Dendritic cell treated with granulocyte-macrophage colony-stimulating factor and Interleukin-4, amounts not matched to agents 40 ng/mL and 50 ng/mL, for 4 days (primary cell): ENCODE measurements at regions of chr20 and their contacts with region 1.

Region 1: DNA sequence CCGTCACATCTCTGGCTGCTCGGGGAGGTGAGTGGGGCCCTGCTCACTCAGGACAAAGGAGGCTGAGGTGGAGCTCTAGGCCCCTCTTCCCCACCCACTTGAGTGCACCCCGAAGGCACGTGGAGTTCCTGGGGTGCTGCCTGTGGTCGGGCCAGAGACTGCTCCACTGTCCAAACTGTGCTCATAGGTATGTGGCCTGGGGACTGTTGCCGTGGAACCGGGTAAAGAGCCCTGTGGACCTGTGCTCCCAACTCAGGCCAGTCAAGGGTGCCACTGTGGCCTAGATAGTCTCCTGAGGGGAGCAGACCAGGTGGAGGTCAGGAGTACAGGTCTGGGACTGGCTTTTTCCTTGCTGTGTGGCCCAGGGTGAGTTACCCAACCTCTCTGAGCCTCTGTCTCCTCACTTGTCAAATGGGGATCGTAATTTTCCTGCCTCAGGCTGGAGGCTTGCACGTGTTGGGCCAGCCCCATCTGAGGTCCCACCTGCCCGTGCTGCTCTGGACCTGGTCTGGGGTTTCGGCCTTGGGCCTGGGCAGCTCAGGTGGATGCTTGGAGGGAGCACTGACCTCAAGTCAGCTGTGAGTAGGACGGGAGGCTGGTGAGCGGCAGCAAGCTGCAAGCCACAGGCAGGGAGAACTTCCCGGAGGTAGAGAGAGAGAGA is 12.4 kb upstream of the NPBWR2 start:
- H3K4me3 Mint-ChIP-seq: no peak overlapping the region
- H3K27ac Mint-ChIP-seq: no peak overlapping the region
- H3K4me1 Mint-ChIP-seq: peaks cover 6% of the 10 kb centered on the region
- H3K27me3 Mint-ChIP-seq: peaks cover 29% of the 10 kb centered on the region

Region 2: DNA sequence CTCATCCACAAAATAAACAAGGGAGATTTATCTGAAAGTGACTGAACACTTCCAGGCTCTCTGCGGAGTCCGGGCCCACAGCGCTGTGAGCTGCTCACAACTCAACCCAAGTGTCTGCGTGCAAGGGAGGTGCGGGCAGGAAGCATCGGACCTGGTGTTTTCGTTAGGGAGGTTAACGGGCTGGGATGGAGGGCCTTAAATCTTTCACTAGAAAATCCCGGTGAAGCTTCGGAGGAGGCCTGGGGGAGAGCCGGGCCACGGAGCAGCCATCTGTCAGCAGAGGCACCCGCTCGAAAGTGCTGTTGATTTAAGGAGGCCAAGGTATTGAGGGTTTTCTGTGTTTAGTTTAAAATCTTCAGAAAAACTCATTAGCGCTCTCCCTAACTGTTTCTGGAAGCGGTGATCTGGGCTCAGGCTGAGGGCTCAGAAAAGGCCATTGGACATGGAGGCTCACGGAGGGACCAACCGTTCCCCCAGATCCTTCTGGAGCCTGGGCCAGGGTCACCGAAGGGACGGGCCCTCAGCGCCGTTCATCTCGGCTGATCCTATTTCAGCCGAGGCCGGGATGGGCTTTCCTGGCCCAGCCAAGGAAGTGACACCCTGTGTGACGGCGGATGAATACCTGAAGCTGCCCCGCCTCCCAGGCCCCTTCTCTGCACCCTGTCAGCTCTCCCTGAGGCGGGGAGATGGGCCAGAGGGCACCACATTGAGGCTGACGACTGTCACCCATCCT is 1664.7 kb before region 1 on chr20:
- intact Hi-C with region 1: no loop called
- H3K4me3 Mint-ChIP-seq: no peak overlapping the region
- H3K27ac Mint-ChIP-seq: no peak overlapping the region
- H3K4me1 Mint-ChIP-seq: no peaks in the 10 kb centered on the region
- H3K27me3 Mint-ChIP-seq: peaks cover 8% of the 10 kb centered on the region

Region 3: GRCh38 chr20:63980806-63981728 is 138.7 kb before region 1 on chr20 and contains the start of gene PRPF6:
- intact Hi-C with region 1: loop called (anchors 5 kb)
- H3K4me3 Mint-ChIP-seq: peak within 1 kb of the TSS; percentile 81
- H3K27ac Mint-ChIP-seq: peak within 1 kb of the TSS; percentile 85
- H3K4me1 Mint-ChIP-seq: peaks cover 59% of the 10 kb centered on the region
- H3K27me3 Mint-ChIP-seq: peaks cover 3% of the 10 kb centered on the region

Region 4: DNA sequence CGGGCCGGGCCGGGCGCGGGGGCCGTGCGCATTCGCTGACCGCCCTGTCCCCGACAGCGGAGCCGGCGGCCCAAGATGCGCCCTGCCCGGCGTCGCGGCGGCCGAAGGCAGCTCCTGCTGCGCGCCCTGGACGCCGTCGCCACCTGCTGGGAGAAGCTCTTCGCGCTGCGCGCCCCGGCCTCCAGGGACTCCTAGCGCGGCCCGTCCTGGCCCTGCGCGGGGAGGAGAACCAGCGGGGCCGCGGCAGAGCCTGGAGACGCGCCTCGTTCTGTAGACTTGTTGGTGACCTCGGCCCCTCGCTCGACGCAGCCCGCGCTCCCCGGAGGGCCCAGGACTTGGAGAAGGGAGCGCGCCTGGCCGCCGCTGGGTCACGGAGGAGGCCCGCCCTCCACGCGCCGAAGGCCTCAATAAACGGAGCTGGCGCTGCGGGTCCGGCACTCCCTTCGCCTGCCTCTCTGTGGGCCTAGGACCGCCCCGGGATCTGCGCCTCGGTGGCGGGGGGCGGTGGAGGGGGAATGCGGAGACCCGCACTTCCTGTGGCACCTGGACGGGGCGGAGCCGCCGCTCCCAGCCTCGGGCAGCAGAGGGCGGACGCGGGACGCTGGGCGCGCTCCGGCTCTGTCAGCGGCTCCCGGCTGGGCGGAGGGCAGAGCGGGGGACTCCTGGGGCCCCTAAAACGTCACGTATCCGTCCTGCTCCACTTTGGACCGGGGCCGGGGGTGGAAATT is 81.1 kb before region 1 on chr20:
- intact Hi-C with region 1: loop called (anchors 1 kb)
- H3K4me3 Mint-ChIP-seq: peak overlapping the region; percentile 78
- H3K27ac Mint-ChIP-seq: no peak overlapping the region
- H3K4me1 Mint-ChIP-seq: peaks cover 17% of the 10 kb centered on the region
- H3K27me3 Mint-ChIP-seq: peaks cover 69% of the 10 kb centered on the region

Region 5: DNA sequence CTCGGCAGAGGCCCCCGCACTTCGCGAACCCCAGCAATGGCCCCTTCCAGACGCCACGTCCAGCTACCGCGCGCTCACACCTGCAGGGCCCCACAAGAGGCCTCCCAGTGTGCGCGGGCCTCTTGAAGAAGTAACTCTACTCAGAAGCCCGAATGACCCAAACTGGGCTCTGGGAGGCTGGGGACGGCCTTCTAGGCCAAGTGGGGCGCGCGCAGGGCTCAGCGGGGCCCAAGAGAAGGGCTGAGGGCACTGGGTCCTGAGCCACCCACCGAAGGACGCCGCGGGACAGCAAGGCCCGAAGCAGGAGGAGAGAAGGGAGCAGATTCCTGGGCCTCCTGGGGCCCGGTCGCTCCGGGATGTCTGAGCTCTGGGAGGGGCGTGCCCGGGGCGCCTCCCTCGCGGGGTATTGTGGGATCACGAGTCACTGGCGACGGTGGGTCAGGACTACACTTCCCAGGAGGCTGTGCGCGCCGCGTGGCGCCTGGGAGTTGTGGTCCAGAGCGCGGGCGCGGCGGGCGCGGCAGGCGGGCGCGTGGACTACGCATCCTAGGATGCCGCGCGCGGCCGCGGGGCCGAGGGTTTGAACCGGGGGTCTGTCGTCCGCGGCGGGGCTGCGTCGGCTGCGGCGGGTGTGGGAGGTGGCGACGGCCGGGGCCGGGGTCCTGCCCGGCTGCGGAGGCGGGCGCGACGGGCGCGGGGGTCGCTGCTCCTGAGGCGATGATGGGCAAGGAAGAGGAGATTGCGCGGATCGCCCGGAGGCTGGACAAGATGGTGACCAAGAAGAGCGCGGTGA is 57.0 kb before region 1 on chr20 and contains the start of gene TCEA2:
- intact Hi-C with region 1: no loop called
- H3K4me3 Mint-ChIP-seq: peak within 1 kb of the TSS; percentile 92
- H3K27ac Mint-ChIP-seq: peak within 1 kb of the TSS; percentile 90
- H3K4me1 Mint-ChIP-seq: peaks cover 55% of the 10 kb centered on the region
- H3K27me3 Mint-ChIP-seq: peaks cover 43% of the 10 kb centered on the region

Region 6: GRCh38 chr20:64083378-64083803 is 36.4 kb before region 1 on chr20:
- intact Hi-C with region 1: loop called (anchors 1 kb)
- H3K4me3 Mint-ChIP-seq: peak overlapping the region; percentile 78
- H3K27ac Mint-ChIP-seq: peak overlapping the region; percentile 81
- H3K4me1 Mint-ChIP-seq: peaks cover 47% of the 10 kb centered on the region
- H3K27me3 Mint-ChIP-seq: peaks cover 30% of the 10 kb centered on the region

Region 7: GRCh38 chr20:64261138-64261537 is 141.3 kb after region 1 on chr20:
- intact Hi-C with region 1: no loop called
- H3K4me3 Mint-ChIP-seq: no peak overlapping the region
- H3K27ac Mint-ChIP-seq: no peak overlapping the region
- H3K4me1 Mint-ChIP-seq: peaks cover 30% of the 10 kb centered on the region
- H3K27me3 Mint-ChIP-seq: no peaks in the 10 kb centered on the region